Psoas muscle (tissue), 8 donors: ENCODE measurements at regions of chr16 and their contacts with region 1.

Region 1: GRCh38 chr16:19086322-19087199 is 19.1 kb downstream of the COQ7 start:
- DNase-seq: peak; percentile 85 to 91
- ATAC-seq: peak; percentile 96 to 99 (median 98)
- H3K4me3 ChIP-seq: peak overlapping the region; percentile 67
- H3K27ac ChIP-seq: no peak overlapping the region
- H3K4me1 ChIP-seq: peaks cover 7% of the 10 kb centered on the region
- H3K27me3 ChIP-seq: no peaks in the 10 kb centered on the region
- CTCF ChIP-seq: peak; percentile 100

Region 2: DNA sequence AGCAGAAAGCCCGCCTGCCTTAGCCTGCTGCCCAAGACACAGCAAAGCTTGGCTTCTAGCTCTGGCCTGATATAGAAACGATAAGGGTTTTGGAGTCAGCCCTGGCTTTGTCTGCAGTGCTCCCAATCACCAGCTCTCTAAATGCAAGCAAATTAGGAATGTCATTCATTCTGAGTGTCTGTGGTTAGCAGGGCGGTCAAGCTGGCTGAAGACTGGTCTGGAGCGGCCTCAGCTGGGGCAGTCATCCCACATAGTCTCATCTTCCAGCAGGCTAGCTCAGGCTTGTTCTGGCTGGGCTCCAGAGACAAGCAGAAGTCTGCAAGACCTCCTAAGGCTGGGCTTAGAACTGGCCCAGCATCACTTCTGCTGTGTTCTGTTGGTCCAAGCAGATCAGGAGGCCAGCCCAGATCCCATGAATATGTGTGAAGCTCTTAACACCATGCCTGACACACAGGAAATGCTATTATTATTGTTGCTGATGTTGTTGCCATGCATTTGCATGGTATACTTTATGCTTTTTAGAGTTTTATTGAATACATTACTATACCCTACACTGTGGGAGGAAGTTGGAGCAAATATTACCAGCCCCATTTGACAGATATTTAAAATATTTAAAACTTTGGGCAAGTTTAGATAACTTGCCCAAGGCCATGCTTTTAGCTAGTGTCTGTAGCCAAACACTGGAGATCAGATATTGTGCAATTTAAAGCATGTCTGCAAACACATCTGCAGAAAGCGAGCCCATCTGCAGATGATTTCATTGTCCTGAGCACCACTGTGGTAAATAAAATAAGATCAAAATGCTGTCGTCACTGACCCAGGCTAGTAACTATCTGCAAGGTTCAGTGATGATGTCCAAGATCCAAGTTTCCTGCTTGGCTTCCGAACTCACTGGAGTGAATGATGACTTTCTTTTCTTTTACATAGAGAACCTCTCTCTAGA is 78.0 kb before region 1 on chr16:
- intact Hi-C with region 1: no loop called
- DNase-seq: no peak
- ATAC-seq: no peak
- H3K4me3 ChIP-seq: no peak overlapping the region
- H3K27ac ChIP-seq: no peak overlapping the region
- H3K4me1 ChIP-seq: no peaks in the 10 kb centered on the region
- H3K27me3 ChIP-seq: no peaks in the 10 kb centered on the region
- CTCF ChIP-seq: no peak

Region 3: DNA sequence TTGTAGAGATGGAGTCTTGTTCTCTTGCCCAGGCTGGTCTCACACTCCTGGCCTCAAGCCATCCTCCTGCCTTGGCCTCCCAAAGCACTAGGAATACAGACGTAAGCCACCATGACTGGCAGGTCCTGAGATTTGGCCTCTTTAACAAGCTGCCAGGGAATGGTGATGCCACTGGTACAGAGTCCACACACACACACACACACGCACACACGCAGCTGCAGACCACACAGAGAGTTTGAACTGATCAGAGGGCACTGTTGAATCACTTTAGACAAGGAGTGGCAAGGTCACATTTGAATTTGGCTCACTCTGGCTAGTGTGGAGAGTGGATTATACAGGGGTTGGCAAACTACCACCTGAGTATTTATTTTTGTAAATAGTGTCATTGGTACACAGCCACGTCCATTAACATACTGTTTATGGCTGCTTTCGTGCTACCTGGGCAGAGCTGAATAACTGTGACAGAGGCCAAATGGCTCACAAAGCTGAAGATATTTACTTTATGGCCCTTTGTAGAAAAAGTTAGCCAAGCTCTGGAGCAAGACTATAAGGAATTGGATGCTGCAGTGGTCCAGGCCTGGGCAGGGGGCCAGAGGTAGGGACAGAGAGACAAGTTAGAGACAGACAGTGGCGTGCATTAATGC is 37.1 kb after region 1 on chr16:
- intact Hi-C with region 1: loop called in 1 of 2 experiments (anchors 5 kb)
- DNase-seq: peak in 1 of 2 donors; percentile 62
- ATAC-seq: peak; percentile 28 to 82 (median 79)
- H3K4me3 ChIP-seq: no peak overlapping the region
- H3K27ac ChIP-seq: peak overlapping the region; percentile 32
- H3K4me1 ChIP-seq: peaks cover 12% of the 10 kb centered on the region
- H3K27me3 ChIP-seq: no peaks in the 10 kb centered on the region
- CTCF ChIP-seq: no peak

Region 4: DNA sequence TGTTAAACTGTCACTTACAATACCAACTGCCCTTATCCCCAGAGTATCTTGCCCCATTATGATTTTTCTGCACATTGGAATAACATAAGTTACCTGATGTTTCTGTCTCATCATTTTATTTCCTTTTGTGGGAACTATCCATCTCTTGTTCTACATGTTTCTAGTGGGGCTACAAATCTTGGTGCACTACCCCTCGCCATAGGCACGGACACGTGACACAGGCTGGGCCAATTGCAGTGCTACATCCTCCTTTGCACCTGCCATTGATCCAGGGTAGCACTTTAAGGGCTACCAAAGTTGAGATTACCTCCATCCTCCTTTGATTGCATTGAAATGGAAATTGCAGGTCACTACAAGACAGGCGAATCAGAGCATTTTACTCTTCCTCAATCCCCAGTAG is 67.3 kb after region 1 on chr16:
- intact Hi-C with region 1: no loop called
- DNase-seq: no peak
- ATAC-seq: no peak
- H3K4me3 ChIP-seq: no peak overlapping the region
- H3K27ac ChIP-seq: no peak overlapping the region
- H3K4me1 ChIP-seq: no peaks in the 10 kb centered on the region
- H3K27me3 ChIP-seq: no peaks in the 10 kb centered on the region
- CTCF ChIP-seq: no peak

Region 5: DNA sequence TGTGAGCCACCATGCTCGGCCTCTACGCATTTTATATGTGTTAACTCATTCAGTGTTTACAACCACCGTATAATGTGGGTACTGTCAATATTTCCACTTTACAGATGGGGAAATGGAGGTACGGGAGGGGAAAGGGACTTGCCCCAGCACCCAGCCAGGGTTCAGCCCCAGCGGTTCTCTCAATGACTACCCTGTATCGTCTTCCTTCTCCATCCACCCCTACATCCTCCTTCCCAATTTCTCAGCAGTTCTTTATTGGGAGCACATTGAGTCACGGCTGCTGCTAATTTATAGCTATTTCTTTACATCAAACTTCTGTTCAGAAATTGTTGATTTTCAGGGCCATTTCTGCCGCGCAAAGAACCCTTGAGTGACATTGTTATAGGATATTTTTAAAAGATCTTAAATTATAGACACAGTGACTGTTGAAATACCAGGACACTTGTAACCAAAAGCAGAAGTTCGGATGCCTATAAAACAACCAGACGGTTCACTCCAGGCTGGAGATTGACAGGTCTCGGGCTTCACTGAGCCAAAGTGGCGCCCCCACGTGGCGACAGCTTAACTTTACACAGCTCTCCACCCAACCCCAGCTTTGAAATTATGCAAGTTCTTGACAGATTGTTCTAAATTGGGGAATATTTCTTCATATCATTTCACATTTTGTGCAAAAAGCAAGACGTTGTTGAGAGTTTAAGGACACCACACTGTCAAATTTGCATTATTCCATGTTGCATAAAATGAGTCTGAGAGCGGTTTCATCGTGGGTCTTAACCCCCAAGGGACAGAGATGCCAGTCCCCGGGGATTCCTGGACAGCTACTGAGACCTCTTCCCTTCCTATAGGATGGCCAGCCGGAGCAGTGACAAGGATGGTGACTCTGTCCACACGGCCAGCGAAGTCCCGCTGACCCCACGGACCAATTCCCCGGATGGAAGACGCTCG is 93.3 kb after region 1 on chr16:
- intact Hi-C with region 1: loop called (anchors 2 to 5 kb)
- DNase-seq: peak; percentile 66 to 82
- ATAC-seq: peak in 2 of 4 donors; percentile 60 to 74
- H3K4me3 ChIP-seq: no peak overlapping the region
- H3K27ac ChIP-seq: no peak overlapping the region
- H3K4me1 ChIP-seq: no peaks in the 10 kb centered on the region
- H3K27me3 ChIP-seq: no peaks in the 10 kb centered on the region
- CTCF ChIP-seq: peak; percentile 58

Region 6: DNA sequence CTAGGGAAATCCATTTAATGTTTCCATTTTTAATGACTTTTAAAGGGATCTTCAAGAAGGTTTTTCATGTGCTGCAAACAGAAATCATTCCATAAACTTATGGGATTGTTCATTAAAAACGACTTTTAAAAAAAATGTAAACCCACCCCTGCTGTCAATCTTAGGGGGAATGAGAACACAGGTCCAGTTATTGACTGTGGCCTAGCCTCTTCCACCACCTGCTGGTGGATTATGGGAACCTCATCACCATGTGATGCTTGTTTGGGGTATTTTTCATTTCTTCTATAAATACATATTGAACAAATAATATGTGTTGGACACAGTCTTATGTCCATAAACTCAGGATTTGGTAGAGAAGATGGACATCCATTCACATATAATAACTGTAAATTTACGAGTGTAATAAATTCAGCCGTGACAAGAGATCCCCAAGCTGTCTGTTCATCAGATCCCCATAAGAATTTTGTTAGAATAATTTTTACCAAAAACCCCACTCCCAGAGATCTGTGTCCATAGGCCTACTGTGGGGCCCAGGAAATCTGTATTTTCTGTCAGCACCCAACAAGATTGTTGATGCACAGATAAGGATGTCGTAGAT is 289.1 kb after region 1 on chr16:
- intact Hi-C with region 1: loop called (anchors 1 to 2 kb)
- DNase-seq: peak in 1 of 2 donors; percentile 16
- ATAC-seq: peak in 2 of 4 donors; percentile 59 to 72
- H3K4me3 ChIP-seq: no peak overlapping the region
- H3K27ac ChIP-seq: no peak overlapping the region
- H3K4me1 ChIP-seq: no peaks in the 10 kb centered on the region
- H3K27me3 ChIP-seq: no peaks in the 10 kb centered on the region
- CTCF ChIP-seq: peak; percentile 88

Region 7: GRCh38 chr16:19502395-19503131 is 416.0 kb after region 1 on chr16:
- intact Hi-C with region 1: loop called (anchors 2 to 5 kb)
- DNase-seq: peak; percentile 54 to 58
- ATAC-seq: peak; percentile 39 to 78 (median 60)
- H3K4me3 ChIP-seq: no peak overlapping the region
- H3K27ac ChIP-seq: no peak overlapping the region
- H3K4me1 ChIP-seq: no peaks in the 10 kb centered on the region
- H3K27me3 ChIP-seq: no peaks in the 10 kb centered on the region
- CTCF ChIP-seq: peak; percentile 71